ENCODE measurements at regions of chr2 and their contacts with region 1.

Region 1: DNA sequence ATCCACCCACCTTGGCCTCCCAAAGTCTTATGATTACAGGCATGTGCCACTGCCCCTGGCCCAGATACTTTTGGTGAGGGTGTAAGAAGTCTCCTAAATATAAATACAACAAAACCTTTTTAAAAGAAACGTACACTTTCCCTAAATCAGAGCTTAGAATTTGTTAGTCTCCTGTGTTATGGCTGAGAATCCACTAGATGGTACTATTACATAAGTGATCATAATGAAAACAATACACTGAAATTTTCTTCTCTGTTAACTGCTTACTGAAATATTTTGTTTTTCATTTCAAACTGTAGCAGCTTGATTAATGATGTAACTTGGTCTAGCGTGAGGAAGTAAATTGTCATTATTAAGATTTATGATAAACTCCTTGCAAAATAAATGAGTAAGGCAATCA is 74.8 kb upstream of the FAM98A start:
- DNase-seq: peak; percentile 36
- H3K4me3 ChIP-seq: no peak overlapping the region
- H3K27ac ChIP-seq: no peak overlapping the region
- H3K4me1 ChIP-seq: peaks cover 9% of the 10 kb centered on the region
- H3K27me3 ChIP-seq: no peaks in the 10 kb centered on the region
- CTCF ChIP-seq: peak; percentile 65

Region 2: DNA sequence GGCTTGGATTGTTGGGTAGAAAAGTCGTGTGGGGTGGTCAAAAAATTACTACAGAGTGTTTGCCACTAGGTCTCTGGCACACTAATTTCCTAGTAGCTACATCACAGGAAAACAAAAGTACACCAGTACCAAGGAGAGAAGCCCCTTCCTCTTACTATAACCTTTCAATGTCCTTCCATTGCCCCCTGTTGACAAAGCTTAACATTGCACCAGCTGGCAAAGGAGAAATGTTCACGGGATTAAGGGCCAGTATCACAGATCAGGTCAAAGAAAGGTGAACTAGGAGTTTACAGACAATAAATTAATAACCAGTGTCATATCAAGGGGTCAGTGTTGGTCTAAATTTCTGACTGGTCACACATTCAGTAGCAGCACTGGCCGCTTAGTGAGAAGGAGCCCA is 1064.8 kb after region 1 on chr2:
- CTCF ChIA-PET with region 1: no interaction called
- POLR2A ChIA-PET with region 1: no interaction called
- intact Hi-C with region 1: loop called (anchors 5 kb)
- DNase-seq: peak; percentile 5
- H3K4me3 ChIP-seq: no peak overlapping the region
- H3K27ac ChIP-seq: no peak overlapping the region
- H3K4me1 ChIP-seq: no peaks in the 10 kb centered on the region
- H3K27me3 ChIP-seq: no peaks in the 10 kb centered on the region
- CTCF ChIP-seq: peak; percentile 63